ENCODE measurements at regions of chr1 and their contacts with region 1.

Region 1: GRCh38 chr1:243917177-243917862 is 67.3 kb upstream of the AKT3 start:
- DNase-seq: peak; percentile 79
- H3K4me3 ChIP-seq: peak overlapping the region; percentile 0 to 42 (median 17)
- H3K27ac ChIP-seq: peak overlapping the region; percentile 82
- H3K4me1 ChIP-seq: peaks cover 18% of the 10 kb centered on the region
- H3K27me3 ChIP-seq: no peaks in the 10 kb centered on the region
- CTCF ChIP-seq: no peak
- POLR2A ChIP-seq: no peak

Region 2: GRCh38 chr1:243882276-243882675 is 35.0 kb before region 1 on chr1:
- CTCF ChIA-PET with region 1: interaction called, 3 read pairs
- POLR2A ChIA-PET with region 1: no interaction called
- dilution Hi-C with region 1: no loop called
- intact Hi-C with region 1: loop called (anchors 2 kb)
- DNase-seq: no peak
- H3K4me3 ChIP-seq: no peak overlapping the region
- H3K27ac ChIP-seq: no peak overlapping the region
- H3K4me1 ChIP-seq: no peaks in the 10 kb centered on the region
- H3K27me3 ChIP-seq: no peaks in the 10 kb centered on the region
- CTCF ChIP-seq: no peak
- POLR2A ChIP-seq: no peak

Region 3: DNA sequence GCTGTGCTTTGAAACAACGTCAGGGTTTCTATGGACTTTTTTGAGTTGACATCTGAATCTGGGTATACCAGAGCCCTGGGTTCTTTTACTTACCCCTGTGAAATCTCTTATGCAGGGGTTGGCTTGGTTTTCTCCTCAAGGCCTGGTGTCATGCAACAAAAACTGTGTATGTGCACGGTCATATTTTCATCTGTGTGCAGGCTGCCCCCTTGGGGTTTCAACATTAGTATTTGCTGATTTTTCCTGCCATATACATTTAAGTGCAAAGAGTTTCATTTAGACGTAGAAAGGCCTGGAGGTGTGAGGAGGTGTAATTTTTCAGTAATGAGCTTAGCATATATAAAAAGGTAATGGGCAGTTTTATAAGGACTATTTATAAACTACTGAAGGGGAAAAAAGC is 111.8 kb after region 1 on chr1:
- CTCF ChIA-PET with region 1: no interaction called
- POLR2A ChIA-PET with region 1: no interaction called
- dilution Hi-C with region 1: no loop called
- intact Hi-C with region 1: no loop called
- DNase-seq: no peak
- H3K4me3 ChIP-seq: no peak overlapping the region
- H3K27ac ChIP-seq: no peak overlapping the region
- H3K4me1 ChIP-seq: no peaks in the 10 kb centered on the region
- H3K27me3 ChIP-seq: peaks cover 0 to 4% of the 10 kb centered on the region in 2 experiments
- CTCF ChIP-seq: no peak
- POLR2A ChIP-seq: no peak